CD4-positive, alpha-beta memory T cell (primary cell): ENCODE measurements at regions of chr9 and their contacts with region 1.

Region 1: GRCh38 chr9:129320575-129321263 is 142.7 kb upstream of the IER5L start:
- DNase-seq: peak; percentile 63 to 74 (median 68)
- H3K4me3 ChIP-seq: peak overlapping the region in 1 of 2 donors; percentile 51
- H3K4me3 Mint-ChIP-seq: peak overlapping the region; percentile 62 to 90 (median 82)
- H3K27ac ChIP-seq: no peak overlapping the region
- H3K27ac Mint-ChIP-seq: peak overlapping the region in 6 of 7 donors; percentile 50 to 97 (median 78)
- H3K4me1 ChIP-seq: peaks cover 20% of the 10 kb centered on the region
- H3K4me1 Mint-ChIP-seq: peaks cover 5 to 20% (median 9%) of the 10 kb centered on the region in 4 donors
- H3K27me3 ChIP-seq: no peaks in the 10 kb centered on the region
- H3K27me3 Mint-ChIP-seq: peaks cover 0 to 1% of the 10 kb centered on the region in 2 donors

Region 2: DNA sequence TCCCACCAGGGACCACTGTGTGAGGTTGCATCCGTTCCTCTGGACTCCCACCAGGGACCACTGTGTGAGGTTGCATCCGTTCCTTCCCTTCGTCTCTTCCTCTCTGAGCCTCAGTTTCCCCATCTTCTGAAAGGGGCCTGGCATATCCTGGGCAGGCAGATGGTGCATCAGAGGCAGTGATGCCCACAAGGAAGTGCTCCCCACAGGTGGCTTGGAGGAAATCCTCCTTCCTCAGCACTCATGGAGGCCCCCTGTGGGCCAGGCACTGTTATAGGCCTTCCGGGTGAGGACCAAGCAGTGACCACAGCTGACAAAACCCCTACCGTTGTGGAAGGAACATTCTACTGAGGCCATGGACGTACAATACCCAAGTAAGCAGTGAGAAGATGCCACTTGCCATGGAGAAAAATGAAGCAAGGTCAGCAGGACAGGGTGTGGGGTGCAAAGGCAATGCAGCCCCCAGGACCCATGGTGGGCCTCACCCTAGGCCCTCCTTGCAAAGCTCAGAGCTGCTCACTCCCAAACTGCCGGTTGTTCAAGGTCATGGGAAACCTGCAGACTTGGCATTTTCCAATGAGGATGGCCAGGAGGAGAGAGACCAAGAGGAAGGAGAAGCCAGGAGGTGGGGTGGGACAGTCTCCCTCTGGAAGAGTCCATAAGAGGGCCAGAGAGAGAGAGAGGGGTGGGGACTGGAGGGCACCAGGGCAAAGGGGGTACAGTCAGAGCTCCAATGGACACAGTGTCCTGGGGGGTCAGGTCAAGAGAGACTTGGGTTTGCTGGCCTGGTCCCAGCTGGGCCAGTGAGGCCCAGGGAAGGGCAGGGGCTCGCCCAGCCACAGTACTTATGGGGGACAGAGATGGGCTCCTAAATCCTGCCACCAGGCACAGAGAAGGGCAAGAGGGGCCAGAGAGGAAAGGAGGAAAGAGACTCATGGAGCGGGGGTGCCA is 249.1 kb after region 1 on chr9:
- CTCF ChIA-PET with region 1: no interaction called
- POLR2A ChIA-PET with region 1: no interaction called
- intact Hi-C with region 1: loop called (anchors 1 kb)
- DNase-seq: no peak
- H3K4me3 ChIP-seq: no peak overlapping the region
- H3K4me3 Mint-ChIP-seq: peak overlapping the region; percentile 3 to 82 (median 76)
- H3K27ac ChIP-seq: no peak overlapping the region
- H3K27ac Mint-ChIP-seq: peak overlapping the region in 2 of 7 donors; percentile 15 to 77
- H3K4me1 ChIP-seq: peaks cover 20% of the 10 kb centered on the region
- H3K4me1 Mint-ChIP-seq: peaks cover 0 to 13% (median 9%) of the 10 kb centered on the region in 4 donors
- H3K27me3 ChIP-seq: peaks cover 15% of the 10 kb centered on the region
- H3K27me3 Mint-ChIP-seq: peaks cover 13 to 14% of the 10 kb centered on the region in 2 donors